A673 (cell line): ENCODE measurements at regions of chr6 and their contacts with region 1.

Region 1: GRCh38 chr6:101918471-101918870 is 525.0 kb downstream of the GRIK2 start:
- DNase-seq: peak; percentile 96
- H3K4me3 ChIP-seq: no peak overlapping the region
- H3K27ac ChIP-seq: peak overlapping the region; percentile 96
- H3K4me1 ChIP-seq: peaks cover 96% of the 10 kb centered on the region
- H3K27me3 ChIP-seq: no peaks in the 10 kb centered on the region
- CTCF ChIP-seq: no peak

Region 2: GRCh38 chr6:101108286-101108685 is 810.2 kb before region 1 on chr6:
- CTCF ChIA-PET with region 1: no interaction called
- POLR2A ChIA-PET with region 1: no interaction called
- intact Hi-C with region 1: loop called (anchors 2 kb)
- DNase-seq: no peak
- H3K4me3 ChIP-seq: no peak overlapping the region
- H3K27ac ChIP-seq: peak overlapping the region; percentile 50
- H3K4me1 ChIP-seq: peaks cover 43% of the 10 kb centered on the region
- H3K27me3 ChIP-seq: no peaks in the 10 kb centered on the region
- CTCF ChIP-seq: no peak

Region 3: GRCh38 chr6:101114703-101115102 is 803.8 kb before region 1 on chr6:
- CTCF ChIA-PET with region 1: no interaction called
- POLR2A ChIA-PET with region 1: no interaction called
- intact Hi-C with region 1: loop called (anchors 2 kb)
- DNase-seq: peak; percentile 90
- H3K4me3 ChIP-seq: peak overlapping the region; percentile 9
- H3K27ac ChIP-seq: no peak overlapping the region
- H3K4me1 ChIP-seq: peaks cover 60% of the 10 kb centered on the region
- H3K27me3 ChIP-seq: no peaks in the 10 kb centered on the region
- CTCF ChIP-seq: peak; percentile 84

Region 4: DNA sequence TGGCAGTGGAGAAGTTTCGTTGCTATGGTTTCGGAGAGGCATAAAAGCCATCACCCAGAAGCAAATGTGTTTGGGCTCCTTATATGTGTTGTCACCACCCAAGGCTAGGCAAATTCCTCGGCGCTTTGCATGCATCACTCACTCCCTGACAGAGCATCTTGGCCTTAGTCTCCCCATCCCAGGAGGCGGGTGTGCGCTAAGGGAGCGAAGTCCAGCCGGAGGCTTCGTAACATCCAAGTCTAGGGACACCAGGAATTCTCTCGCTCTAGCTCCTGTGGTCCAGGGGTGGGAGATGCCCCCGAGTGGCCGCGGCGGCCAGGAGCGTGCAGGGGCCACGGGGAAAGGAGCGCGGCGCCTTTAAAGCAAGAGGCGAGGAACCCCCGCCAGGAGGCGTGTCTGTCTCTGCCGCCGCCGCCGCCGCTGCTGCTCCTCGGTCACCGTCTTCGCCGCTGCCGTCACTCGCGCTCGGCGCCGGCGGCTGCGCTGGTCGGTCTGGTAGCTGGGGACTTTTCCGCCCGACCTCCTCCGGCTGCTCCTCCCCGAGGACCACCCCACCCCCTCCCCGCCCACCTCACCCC is 525.1 kb before region 1 on chr6 and contains the start of gene GRIK2:
- CTCF ChIA-PET with region 1: no interaction called
- POLR2A ChIA-PET with region 1: no interaction called
- intact Hi-C with region 1: loop called (anchors 5 kb)
- DNase-seq: peak; percentile 81
- H3K4me3 ChIP-seq: peak within 1 kb of the TSS; percentile 75
- H3K27ac ChIP-seq: peak within 1 kb of the TSS; percentile 71
- H3K4me1 ChIP-seq: peaks cover 13% of the 10 kb centered on the region
- H3K27me3 ChIP-seq: no peaks in the 10 kb centered on the region
- CTCF ChIP-seq: peak; percentile 45; the same call in 1 of the 2 replicates
- total RNA-seq, gene GRIK2: 62.1 and 65.6 TPM in 2 replicates